ENCODE measurements at regions of chr13 and their contacts with region 1.

Region 1: GRCh38 chr13:22801402-22802003 is 379.3 kb upstream of the SGCG start:
- ATAC-seq: peak in 1 of 8 experiments; percentile 46
- H3K4me3 ChIP-seq: no peak overlapping the region
- H3K27ac ChIP-seq: no peak overlapping the region
- H3K4me1 ChIP-seq: peaks cover 0 to 4% of the 10 kb centered on the region in 2 donors

Region 2: GRCh38 chr13:22925881-22926747 is 124.6 kb after region 1 on chr13:
- in situ Hi-C with region 1: no loop called
- ATAC-seq: peak in 7 of 8 experiments; percentile 43 to 98 (median 85)
- H3K4me3 ChIP-seq: peak overlapping the region in 2 of 5 donors; percentile 21 to 26
- H3K27ac ChIP-seq: peak overlapping the region in 1 of 2 donors; percentile 76
- H3K4me1 ChIP-seq: no peaks in the 10 kb centered on the region

Region 3: GRCh38 chr13:23020223-23020843 is 218.8 kb after region 1 on chr13:
- in situ Hi-C with region 1: loop called in 1 of 9 experiments (anchors 25 kb)
- ATAC-seq: peak; percentile 69 to 96 (median 90)
- H3K4me3 ChIP-seq: no peak overlapping the region
- H3K27ac ChIP-seq: no peak overlapping the region
- H3K4me1 ChIP-seq: peaks cover 0 to 8% of the 10 kb centered on the region in 2 donors

Region 4: DNA sequence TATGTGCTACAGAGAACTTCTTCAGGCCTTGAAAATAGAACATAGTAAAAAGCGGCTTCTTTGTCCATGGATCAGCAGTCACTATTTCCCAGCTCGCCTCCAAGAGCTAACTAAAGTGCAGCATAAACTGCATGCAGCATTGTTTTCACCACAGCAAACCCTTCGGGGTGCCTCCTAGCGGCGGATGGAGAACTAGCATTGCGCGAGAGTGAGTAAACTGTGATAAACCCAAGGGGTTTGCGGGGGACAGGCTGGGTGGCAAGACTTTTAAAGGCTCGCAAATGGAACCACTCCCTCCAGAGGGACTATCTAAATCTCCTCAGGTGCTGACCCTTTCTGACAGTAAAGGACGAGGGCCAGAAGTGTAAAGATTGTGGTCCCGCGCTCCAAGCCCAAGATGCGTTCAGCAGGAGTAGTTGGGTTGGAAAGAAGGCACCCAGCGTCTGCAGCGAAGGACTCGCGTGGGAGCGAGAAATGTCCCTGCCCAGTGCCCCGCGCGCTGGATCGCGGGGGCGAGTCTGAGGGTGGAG is 357.8 kb after region 1 on chr13:
- in situ Hi-C with region 1: loop called in 1 of 9 experiments (anchors 25 kb)
- ATAC-seq: peak; percentile 31 to 64 (median 52)
- H3K4me3 ChIP-seq: peak overlapping the region; percentile 38 to 67 (median 53)
- H3K27ac ChIP-seq: no peak overlapping the region
- H3K4me1 ChIP-seq: no peaks in the 10 kb centered on the region

Region 5: GRCh38 chr13:23321535-23322241 is 520.2 kb after region 1 on chr13:
- in situ Hi-C with region 1: loop called in 2 of 9 experiments (anchors 25 kb)
- ATAC-seq: peak; percentile 69 to 99 (median 96)
- H3K4me3 ChIP-seq: no peak overlapping the region
- H3K27ac ChIP-seq: no peak overlapping the region
- H3K4me1 ChIP-seq: peaks cover 0 to 14% of the 10 kb centered on the region in 2 donors